Posterior vena cava (tissue), 2 donors: ENCODE measurements at regions of chr13 and their contacts with region 1.

Region 1: DNA sequence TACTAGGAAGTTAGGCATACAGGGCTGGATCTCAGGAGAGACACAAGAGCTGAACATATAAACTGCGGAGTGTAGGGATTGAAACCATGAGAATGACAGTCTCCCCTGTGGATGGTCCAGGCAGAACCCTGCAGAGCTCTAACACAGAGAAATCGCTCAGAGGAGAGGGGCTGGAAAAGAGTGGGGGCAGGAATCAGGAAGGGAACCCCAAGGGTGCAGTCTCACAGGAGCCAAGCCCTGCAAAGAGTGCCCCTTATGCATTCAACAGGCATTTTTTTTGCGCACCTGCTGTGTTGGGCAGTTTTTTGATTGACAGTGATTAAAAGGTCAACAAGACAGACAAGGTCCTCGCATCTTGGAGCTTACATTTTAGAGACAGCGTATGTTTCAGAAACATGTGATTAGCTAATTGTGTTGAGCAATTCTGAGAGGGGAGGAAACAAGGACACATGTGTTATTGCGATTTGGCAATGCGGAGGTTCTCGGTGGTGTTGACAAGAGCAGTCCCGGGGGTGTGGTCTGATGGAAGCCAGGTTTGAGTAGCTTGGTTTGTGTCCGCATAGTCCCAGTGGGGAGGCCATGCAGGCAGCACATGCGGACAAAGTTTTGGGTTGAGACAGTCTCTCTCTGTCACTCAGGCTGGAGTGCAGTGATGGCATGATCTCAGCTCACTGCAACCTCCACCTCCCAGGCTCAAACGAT is 182.6 kb upstream of the IRS2 start:
- DNase-seq: no peak

Region 2: GRCh38 chr13:109904218-109904617 is 64.8 kb before region 1 on chr13:
- intact Hi-C with region 1: no loop called
- DNase-seq: no peak

Region 3: GRCh38 chr13:109919715-109920375 is 49.2 kb before region 1 on chr13:
- intact Hi-C with region 1: loop called in 1 of 2 experiments (anchors 5 kb)
- DNase-seq: no peak